Psoas muscle (tissue), 8 donors: ENCODE measurements at regions of chr20 and their contacts with region 1.

Region 1: GRCh38 chr20:46089417-46090388 is at the start of gene NCOA5:
- DNase-seq: peak; percentile 97 to 98
- ATAC-seq: peak; percentile 94 to 98 (median 96)
- H3K4me3 ChIP-seq: peak within 1 kb of the TSS; percentile 92
- H3K27ac ChIP-seq: peak within 1 kb of the TSS; percentile 100
- H3K4me1 ChIP-seq: peaks cover 51% of the 10 kb centered on the region
- H3K27me3 ChIP-seq: no peaks in the 10 kb centered on the region
- CTCF ChIP-seq: peak; percentile 28
- total RNA-seq, gene NCOA5: 11.2 to 17.3 (median 12.4) TPM

Region 2: GRCh38 chr20:45798935-45799642 is 290.6 kb before region 1 on chr20:
- intact Hi-C with region 1: loop called in 1 of 2 experiments (anchors 10 kb)
- DNase-seq: peak in 1 of 2 donors; percentile 44
- ATAC-seq: peak; percentile 55 to 67 (median 62)
- H3K4me3 ChIP-seq: no peak overlapping the region
- H3K27ac ChIP-seq: peak overlapping the region; percentile 80
- H3K4me1 ChIP-seq: peaks cover 32% of the 10 kb centered on the region
- H3K27me3 ChIP-seq: no peaks in the 10 kb centered on the region
- CTCF ChIP-seq: peak; percentile 74

Region 3: DNA sequence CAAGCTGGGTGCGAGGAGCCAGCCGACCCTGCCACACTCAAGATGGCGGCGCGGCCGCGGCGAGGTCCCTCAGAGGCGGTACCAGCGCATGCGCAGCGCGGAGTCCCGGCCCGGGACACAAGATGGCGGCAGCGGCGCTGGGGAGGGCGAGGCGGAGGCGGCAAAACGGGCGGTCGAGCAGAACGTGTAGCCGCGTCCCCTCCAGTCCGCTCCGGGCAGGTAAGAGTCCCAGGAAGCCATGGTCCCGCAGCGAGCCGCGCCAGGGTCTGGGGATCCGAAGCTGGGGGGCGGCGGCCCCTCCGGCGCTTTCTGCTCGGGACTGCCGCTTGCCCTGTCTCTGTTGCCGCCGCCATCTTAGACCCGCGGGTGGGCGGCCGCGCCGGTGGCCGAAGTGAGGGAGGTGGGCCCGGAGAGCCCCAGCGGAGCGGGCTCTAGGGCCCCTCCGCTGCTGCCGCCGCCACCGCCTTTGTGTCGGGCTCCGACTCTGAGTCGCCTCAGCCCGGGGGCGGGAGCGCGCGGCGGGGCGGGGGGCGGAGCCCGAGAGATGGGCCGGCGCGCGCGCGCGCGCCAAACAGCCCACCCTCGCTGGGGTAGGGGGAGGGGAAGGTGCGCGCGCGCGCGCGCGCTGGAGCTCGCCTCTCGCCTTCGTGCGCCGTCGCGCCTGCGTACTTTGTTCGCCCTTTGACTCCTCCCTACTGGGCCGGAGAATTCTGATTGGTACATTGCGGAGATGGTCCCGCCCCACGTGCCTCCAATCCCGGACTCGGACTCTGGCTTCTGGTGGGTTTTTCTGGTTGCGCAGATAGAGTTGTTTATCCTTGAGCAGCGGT is 154.9 kb before region 1 on chr20 and contains the start of gene PCIF1:
- intact Hi-C with region 1: no loop called
- DNase-seq: peak; percentile 98 to 99
- ATAC-seq: peak; percentile 86 to 92 (median 88)
- H3K4me3 ChIP-seq: peak within 1 kb of the TSS; percentile 97
- H3K27ac ChIP-seq: peak within 1 kb of the TSS; percentile 100
- H3K4me1 ChIP-seq: peaks cover 18% of the 10 kb centered on the region
- H3K27me3 ChIP-seq: no peaks in the 10 kb centered on the region
- CTCF ChIP-seq: no peak
- total RNA-seq, gene PCIF1: 24.7 to 46.7 (median 32.0) TPM

Region 4: DNA sequence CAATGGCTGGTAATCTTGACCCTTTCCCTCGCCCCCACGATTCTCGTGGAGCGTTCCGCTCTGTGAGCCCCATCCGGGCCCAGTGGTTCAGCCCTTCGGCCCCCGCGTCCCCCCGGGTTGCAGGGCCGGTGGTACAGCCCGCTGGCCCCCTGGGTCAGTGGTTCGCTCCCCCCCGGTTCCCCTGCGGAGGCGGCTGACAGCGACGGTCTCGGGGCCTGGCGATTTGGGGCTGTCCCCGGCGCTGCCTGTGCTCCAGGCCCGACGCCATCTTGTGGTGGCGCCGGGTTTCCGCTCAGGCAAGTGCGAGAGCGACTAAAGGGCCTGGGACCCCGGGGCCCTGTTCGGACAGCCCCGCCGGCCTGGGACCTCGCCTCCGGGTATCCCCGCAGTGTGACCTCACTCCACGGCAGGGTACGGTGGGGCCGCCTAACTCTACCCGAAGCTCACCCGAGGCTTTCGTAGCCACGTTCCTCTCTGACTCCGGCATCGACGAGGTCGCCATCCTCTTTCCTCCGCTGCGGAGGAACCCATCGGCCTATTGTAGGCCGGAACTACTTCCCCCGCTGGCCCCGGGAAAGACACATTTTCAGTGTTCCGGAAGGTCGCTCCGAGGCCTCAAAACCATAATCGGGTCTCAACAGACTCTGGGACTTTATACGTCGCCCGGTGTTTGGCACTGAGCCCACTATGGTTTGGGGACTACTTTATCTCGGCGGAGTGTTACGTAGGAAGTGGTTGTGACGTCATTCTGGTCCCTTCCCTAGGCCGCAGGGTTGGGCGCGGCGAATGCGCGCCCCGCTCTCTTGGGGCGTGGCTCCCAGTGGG is 117.8 kb before region 1 on chr20 and contains the start of gene ZNF335:
- intact Hi-C with region 1: loop called (anchors 5 kb)
- DNase-seq: peak; percentile 97 to 99
- ATAC-seq: peak; percentile 90 to 92 (median 92)
- H3K4me3 ChIP-seq: peak within 1 kb of the TSS; percentile 93
- H3K27ac ChIP-seq: peak within 1 kb of the TSS; percentile 97
- H3K4me1 ChIP-seq: peaks cover 27% of the 10 kb centered on the region
- H3K27me3 ChIP-seq: no peaks in the 10 kb centered on the region
- CTCF ChIP-seq: peak; percentile 49
- total RNA-seq, gene ZNF335: 10.2 to 11.5 (median 10.9) TPM

Region 5: GRCh38 chr20:46132705-46133120 is 43.0 kb after region 1 on chr20:
- intact Hi-C with region 1: no loop called
- DNase-seq: peak; percentile 71 to 82
- ATAC-seq: peak; percentile 85 to 95 (median 90)
- H3K4me3 ChIP-seq: no peak overlapping the region
- H3K27ac ChIP-seq: no peak overlapping the region
- H3K4me1 ChIP-seq: peaks cover 13% of the 10 kb centered on the region
- H3K27me3 ChIP-seq: peaks cover 0 to 8% (median 0%) of the 10 kb centered on the region in 3 donors
- CTCF ChIP-seq: peak; percentile 86